Sigmoid colon (tissue), 7 donors: ENCODE measurements at regions of chr4 and their contacts with region 1.

Region 1: GRCh38 chr4:8468746-8469535 is 28.4 kb downstream of the TRMT44 start:
- DNase-seq: peak; percentile 82
- H3K4me3 ChIP-seq: no peak overlapping the region
- H3K27ac ChIP-seq: no peak overlapping the region
- H3K4me1 ChIP-seq: peaks cover 0 to 26% (median 22%) of the 10 kb centered on the region in 4 donors
- H3K27me3 ChIP-seq: no peaks in the 10 kb centered on the region
- CTCF ChIP-seq: peak; percentile 76 to 92 (median 86)
- EP300 ChIP-seq: no peak
- POLR2A ChIP-seq: no peak

Region 2: DNA sequence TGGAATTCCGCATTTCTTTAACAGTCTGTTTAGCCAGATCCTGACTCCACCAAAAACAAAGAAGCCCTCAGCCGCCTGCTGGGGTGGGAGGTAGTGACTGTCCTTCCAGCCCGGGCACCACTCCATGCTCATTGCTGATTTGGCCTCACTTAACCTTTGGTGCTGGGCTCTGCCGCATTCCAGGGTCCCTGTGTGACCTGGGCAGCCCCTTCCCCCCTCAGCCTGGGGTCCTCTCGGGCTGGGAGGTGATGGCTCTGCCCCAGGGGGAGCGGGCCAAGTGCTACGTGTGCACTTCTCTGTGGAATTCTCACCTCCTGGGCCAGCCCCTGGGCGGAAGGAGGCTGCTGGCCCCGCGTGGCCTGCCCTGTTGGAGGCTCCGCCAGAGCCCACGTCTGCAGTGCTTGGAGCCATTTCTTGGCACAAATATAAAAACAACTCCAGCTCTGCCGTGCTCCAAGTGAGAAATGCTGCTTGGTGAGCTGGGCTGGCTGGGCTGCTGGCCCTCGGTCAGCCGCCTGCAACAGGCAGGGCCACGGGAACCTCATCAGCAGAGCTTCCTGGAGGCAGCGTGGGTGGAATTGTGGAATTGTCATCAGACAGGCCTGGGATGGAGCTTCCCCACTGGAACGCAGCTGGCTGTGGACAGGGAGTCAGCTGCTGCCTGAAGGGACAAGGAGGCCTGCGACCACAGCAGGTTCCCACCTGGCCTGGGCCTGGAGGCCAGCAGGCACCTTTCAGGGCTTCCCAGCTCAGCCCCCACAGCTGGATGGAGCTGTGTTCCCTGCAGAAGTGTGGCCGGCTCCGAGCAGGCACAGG is 37.6 kb after region 1 on chr4:
- intact Hi-C with region 1: loop called (anchors 1 kb)
- DNase-seq: peak; percentile 87
- H3K4me3 ChIP-seq: no peak overlapping the region
- H3K27ac ChIP-seq: peak overlapping the region; percentile 58 to 81 (median 78)
- H3K4me1 ChIP-seq: peaks cover 0 to 41% (median 34%) of the 10 kb centered on the region in 4 donors
- H3K27me3 ChIP-seq: no peaks in the 10 kb centered on the region
- CTCF ChIP-seq: no peak
- EP300 ChIP-seq: no peak
- POLR2A ChIP-seq: no peak

Region 3: DNA sequence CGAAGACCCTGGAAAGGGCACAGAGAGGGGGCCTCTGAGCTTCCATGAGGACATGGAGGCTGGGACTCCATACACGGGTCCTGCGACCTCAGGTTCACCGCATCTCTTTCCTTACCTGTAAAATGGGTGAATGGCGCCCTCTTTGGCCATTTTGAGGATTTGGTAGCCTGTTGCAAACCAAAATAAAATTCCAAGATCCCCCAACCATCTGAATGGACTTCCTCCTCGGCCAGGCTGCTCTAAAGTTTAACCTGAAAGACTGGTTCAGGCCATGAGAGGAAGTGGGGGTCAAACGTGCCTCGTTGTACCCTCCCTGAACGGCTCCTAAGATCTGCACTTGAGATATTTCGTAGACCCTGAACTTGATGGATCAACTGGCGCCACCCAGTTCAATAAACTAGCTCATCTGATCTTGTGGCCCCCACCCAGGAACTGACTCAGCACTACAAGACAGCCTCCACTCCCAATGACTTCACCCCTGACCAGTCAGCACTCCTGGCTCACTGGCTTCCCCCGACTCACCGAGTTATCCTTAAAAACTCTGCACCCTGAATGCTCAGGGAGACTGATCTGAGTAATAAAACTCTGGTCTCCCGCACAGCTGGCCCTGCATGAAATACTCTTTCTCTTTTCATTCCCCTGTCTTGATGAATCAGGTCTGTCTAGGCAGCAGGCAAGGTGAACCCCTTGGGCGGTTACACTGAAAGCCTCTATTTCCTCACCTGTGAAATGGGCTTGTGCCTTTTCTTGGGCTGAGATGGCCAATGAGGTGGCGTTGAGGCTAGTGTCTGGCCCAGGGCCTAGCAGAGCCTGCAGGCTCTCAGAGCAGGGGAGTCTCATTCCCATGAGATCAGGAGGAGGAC is 78.4 kb after region 1 on chr4:
- intact Hi-C with region 1: loop called (anchors 1 kb)
- DNase-seq: no peak
- H3K4me3 ChIP-seq: no peak overlapping the region
- H3K27ac ChIP-seq: no peak overlapping the region
- H3K4me1 ChIP-seq: no peaks in the 10 kb centered on the region
- H3K27me3 ChIP-seq: no peaks in the 10 kb centered on the region
- CTCF ChIP-seq: peak in 3 of 4 experiments; percentile 4 to 32 (median 17)
- EP300 ChIP-seq: no peak
- POLR2A ChIP-seq: no peak

Region 4: GRCh38 chr4:8594097-8595038 is 125.4 kb after region 1 on chr4:
- intact Hi-C with region 1: loop called (anchors 1 kb)
- DNase-seq: no peak
- H3K4me3 ChIP-seq: no peak overlapping the region
- H3K27ac ChIP-seq: no peak overlapping the region
- H3K4me1 ChIP-seq: peaks cover 0 to 23% (median 22%) of the 10 kb centered on the region in 4 donors
- H3K27me3 ChIP-seq: peaks cover 13 to 41% (median 32%) of the 10 kb centered on the region in 3 donors
- CTCF ChIP-seq: peak; percentile 44 to 61 (median 58)
- EP300 ChIP-seq: no peak
- POLR2A ChIP-seq: no peak